ENCODE measurements at regions of chr7 and their contacts with region 1.

Region 1: GRCh38 chr7:47474937-47475878 is 106.7 kb downstream of the TNS3 start:
- DNase-seq: peak; percentile 98
- H3K4me3 Mint-ChIP-seq: no peak overlapping the region
- H3K27ac Mint-ChIP-seq: no peak overlapping the region
- H3K4me1 Mint-ChIP-seq: peaks cover 5% of the 10 kb centered on the region
- H3K27me3 Mint-ChIP-seq: no peaks in the 10 kb centered on the region
- CTCF ChIP-seq: no peak

Region 2: GRCh38 chr7:46908770-46909169 is 566.4 kb before region 1 on chr7:
- CTCF ChIA-PET with region 1: no interaction called
- POLR2A ChIA-PET with region 1: no interaction called
- intact Hi-C with region 1: no loop called
- DNase-seq: peak; percentile 60
- H3K4me3 Mint-ChIP-seq: no peak overlapping the region
- H3K27ac Mint-ChIP-seq: peak overlapping the region; percentile 4
- H3K4me1 Mint-ChIP-seq: peaks cover 34% of the 10 kb centered on the region
- H3K27me3 Mint-ChIP-seq: no peaks in the 10 kb centered on the region
- CTCF ChIP-seq: no peak

Region 3: DNA sequence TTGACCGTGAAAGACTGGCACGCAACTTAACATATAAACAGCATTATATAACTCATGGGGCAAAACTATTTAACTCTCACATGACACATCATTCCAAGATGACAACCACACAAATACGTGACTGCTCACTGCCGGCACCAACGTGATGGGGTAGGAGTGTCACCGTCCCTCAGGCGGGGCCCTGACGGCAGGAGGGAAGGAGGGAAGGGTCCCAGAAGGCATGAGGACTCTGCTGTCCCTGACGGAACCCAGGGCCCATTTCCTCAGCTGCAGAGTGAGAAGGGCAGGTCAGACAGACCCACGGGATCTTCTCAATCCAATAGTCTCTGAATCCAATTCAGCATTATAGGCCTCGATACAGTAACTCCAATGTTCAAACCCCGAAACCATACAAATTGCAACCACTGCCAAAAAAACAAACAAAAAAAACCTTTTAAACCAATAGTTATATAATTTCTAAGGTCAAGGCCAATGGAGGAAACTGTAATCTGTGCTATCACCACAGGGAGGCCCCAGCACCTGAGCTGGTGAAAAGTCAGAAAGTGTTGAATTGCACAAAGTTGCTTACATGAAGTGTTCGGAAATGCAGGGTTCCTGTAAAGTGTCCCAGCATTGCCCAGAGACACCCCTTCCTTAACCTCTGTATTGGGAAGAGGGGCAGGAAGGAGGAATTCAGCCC is 30.7 kb before region 1 on chr7:
- CTCF ChIA-PET with region 1: interaction called, 3 read pairs
- POLR2A ChIA-PET with region 1: no interaction called
- intact Hi-C with region 1: loop called (anchors 5 kb)
- DNase-seq: peak; percentile 38
- H3K4me3 Mint-ChIP-seq: no peak overlapping the region
- H3K27ac Mint-ChIP-seq: no peak overlapping the region
- H3K4me1 Mint-ChIP-seq: peaks cover 45% of the 10 kb centered on the region
- H3K27me3 Mint-ChIP-seq: no peaks in the 10 kb centered on the region
- CTCF ChIP-seq: peak; percentile 63

Region 4: DNA sequence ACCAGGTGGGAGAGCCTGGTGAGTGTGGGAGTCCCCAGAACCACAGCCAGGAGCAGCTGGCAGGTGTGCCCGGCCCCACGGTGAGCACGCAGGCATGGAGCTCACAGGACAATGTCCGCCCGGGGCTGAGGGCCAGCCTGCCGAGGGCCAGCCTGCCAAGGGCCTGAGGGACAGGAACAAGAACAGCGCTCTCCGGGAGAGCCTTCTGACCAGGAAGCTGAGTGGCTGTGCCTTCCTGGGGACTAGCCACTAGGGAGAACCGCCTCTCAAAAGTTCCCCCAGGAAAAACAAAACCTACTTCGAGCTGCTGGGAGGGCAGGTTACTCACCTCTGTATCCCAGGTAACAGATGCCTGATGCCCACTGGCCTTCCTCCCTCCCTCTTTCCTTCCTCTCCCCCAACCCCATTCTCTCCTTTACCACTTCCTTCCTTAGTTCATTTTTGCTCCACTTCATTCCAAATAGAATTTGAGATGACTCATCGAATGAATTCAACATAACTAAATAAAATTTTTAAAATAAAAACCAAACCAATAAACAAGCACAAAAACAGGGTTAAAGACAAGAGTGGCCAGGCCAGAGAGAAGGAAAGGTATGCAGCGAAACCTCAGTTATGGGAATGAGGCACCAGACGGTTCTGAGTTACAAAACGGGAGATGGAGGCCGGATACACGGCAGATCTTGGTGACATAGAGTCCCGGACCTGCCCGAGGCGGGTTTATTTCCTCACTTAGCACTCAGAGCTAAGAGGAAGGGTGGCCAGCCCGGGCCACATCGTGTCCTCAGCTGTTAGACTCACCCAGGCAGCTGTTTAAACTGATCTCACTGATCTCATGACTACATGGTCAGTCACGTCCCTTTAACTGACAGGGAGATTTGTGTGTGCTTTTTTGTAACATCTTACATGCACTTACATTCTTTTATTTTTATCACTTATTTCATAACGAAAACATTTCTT is 21.8 kb before region 1 on chr7:
- CTCF ChIA-PET with region 1: interaction called, 5 read pairs
- POLR2A ChIA-PET with region 1: interaction called, 10 read pairs
- intact Hi-C with region 1: no loop called
- DNase-seq: peak; percentile 79
- H3K4me3 Mint-ChIP-seq: peak overlapping the region; percentile 9
- H3K27ac Mint-ChIP-seq: peak overlapping the region; percentile 77
- H3K4me1 Mint-ChIP-seq: peaks cover 44% of the 10 kb centered on the region
- H3K27me3 Mint-ChIP-seq: no peaks in the 10 kb centered on the region
- CTCF ChIP-seq: no peak

Region 5: DNA sequence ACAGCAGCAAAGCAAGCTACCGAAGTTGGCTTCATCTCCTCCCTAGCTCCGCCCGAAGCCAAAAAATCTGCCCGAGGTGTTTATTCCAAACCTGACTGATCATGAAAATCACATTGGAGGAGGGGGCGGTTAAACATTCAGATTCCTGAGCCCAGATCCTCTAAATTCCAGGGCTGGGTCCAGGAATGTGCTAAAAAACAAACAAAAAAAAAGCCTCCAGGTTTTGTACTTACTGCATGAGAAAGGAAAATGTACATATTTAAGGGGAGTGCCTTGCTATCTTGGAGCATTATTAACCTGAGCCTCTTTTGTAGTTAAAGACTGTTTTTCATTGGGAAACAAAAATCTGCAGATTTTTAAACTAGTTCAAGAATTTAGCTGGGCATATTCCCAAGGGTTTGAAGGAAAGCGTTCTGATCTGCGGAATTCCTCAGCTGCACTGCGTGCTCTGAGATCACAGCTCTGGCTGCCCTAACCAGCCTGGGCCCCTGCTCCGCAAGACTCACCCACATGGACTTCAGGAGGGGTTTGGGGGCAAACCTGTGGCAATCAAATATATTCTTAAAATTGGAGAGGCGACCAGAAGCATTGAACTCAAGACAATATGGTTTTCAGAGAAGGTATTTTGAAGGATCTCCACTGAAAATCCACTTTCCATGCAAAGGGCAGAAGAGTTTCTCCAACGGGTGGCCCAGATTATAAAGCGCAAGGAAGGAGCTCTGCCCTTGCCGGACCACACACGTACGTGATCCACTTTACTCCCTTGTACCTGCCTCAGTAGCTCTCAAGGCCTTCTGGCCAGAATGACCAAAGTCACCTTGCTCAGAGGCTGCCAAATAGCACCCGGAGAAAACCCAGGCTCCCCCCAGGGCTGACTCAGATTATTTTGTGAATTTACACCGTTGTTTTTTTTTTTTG is 116.7 kb after region 1 on chr7:
- CTCF ChIA-PET with region 1: no interaction called
- POLR2A ChIA-PET with region 1: no interaction called
- intact Hi-C with region 1: no loop called
- DNase-seq: no peak
- H3K4me3 Mint-ChIP-seq: no peak overlapping the region
- H3K27ac Mint-ChIP-seq: peak overlapping the region; percentile 78
- H3K4me1 Mint-ChIP-seq: peaks cover 35% of the 10 kb centered on the region
- H3K27me3 Mint-ChIP-seq: no peaks in the 10 kb centered on the region
- CTCF ChIP-seq: no peak

Measured in MCF 10A (cell line).